Activated CD4-positive, alpha-beta memory T cell treated with anti-CD3 and anti-CD28 coated beads for 36 hours (primary cell): ENCODE measurements at regions of chrX and their contacts with region 1.

Region 1: DNA sequence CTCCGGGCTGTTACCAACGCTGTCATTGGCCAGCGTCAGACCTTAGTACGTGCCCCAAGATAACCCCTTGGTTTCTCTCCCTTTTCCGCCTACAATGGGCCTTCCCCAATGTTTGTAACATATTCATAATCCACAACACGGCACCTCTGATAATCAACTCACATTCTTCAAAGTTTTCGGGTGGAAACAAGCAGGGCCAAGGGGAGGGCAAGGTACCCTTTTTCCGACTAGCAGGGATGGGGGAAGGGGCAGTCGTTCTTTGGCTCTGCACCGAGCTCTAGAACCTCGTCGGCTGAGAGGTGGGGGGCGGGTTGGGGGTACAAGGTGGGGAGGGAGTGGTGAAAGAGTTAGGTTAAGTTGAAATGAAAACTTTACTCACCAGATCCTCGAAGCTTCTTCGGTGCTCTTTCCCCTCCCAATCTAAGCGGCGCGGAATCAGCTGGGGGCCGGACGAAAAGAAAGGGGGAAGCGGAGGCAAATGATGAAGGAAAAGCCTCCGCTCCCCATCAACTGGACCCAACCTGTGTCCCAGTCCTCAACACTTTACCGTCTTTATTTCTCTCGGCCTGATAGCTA is 1.4 kb downstream of the BRWD3 start:
- DNase-seq: peak; percentile 85
- H3K4me3 Mint-ChIP-seq: peak overlapping the region; percentile 86
- H3K27ac Mint-ChIP-seq: peak overlapping the region; percentile 97
- H3K4me1 Mint-ChIP-seq: peaks cover 17% of the 10 kb centered on the region
- H3K27me3 Mint-ChIP-seq: peaks cover 1% of the 10 kb centered on the region

Region 2: DNA sequence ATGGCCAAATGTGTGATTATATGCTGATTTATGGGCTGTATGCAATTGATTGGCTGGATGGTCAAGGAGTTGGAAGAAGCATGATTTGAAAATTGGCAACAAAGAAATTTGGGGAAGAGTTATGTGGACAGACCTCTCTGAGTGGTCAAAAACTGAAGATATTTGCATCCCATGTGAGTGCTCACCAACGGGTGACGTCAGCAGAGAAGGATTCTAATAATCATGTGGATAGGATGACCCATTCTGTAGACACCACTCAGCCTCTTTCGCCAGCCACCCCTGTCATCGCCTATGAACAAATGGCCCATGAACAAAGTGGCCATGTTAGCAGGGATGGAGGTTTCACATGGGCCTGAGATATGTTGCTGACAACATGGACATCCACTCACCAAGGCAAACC is 284.6 kb before region 1 on chrX:
- CTCF ChIA-PET with region 1: no interaction called
- POLR2A ChIA-PET with region 1: no interaction called
- intact Hi-C with region 1: no loop called
- DNase-seq: no peak
- H3K4me3 Mint-ChIP-seq: no peak overlapping the region
- H3K27ac Mint-ChIP-seq: no peak overlapping the region
- H3K4me1 Mint-ChIP-seq: no peaks in the 10 kb centered on the region
- H3K27me3 Mint-ChIP-seq: no peaks in the 10 kb centered on the region

Region 3: GRCh38 chrX:80667967-80668366 is 140.3 kb before region 1 on chrX:
- CTCF ChIA-PET with region 1: no interaction called
- POLR2A ChIA-PET with region 1: no interaction called
- intact Hi-C with region 1: loop called (anchors 1 kb)
- DNase-seq: peak; percentile 56
- H3K4me3 Mint-ChIP-seq: no peak overlapping the region
- H3K27ac Mint-ChIP-seq: no peak overlapping the region
- H3K4me1 Mint-ChIP-seq: peaks cover 5% of the 10 kb centered on the region
- H3K27me3 Mint-ChIP-seq: no peaks in the 10 kb centered on the region

Region 4: GRCh38 chrX:80747832-80748231 is 60.4 kb before region 1 on chrX:
- CTCF ChIA-PET with region 1: no interaction called
- POLR2A ChIA-PET with region 1: no interaction called
- intact Hi-C with region 1: loop called (anchors 5 kb)
- DNase-seq: peak; percentile 22
- H3K4me3 Mint-ChIP-seq: no peak overlapping the region
- H3K27ac Mint-ChIP-seq: no peak overlapping the region
- H3K4me1 Mint-ChIP-seq: peaks cover 14% of the 10 kb centered on the region
- H3K27me3 Mint-ChIP-seq: no peaks in the 10 kb centered on the region

Region 5: GRCh38 chrX:81201671-81202455 is 393.6 kb after region 1 on chrX and contains the starts of genes HMGN5 and SH3BGRL:
- CTCF ChIA-PET with region 1: no interaction called
- POLR2A ChIA-PET with region 1: no interaction called
- intact Hi-C with region 1: loop called (anchors 1 kb)
- DNase-seq: peak; percentile 78
- H3K4me3 Mint-ChIP-seq: peak within 1 kb of the TSS; percentile 95
- H3K27ac Mint-ChIP-seq: peak within 1 kb of the TSS; percentile 92
- H3K4me1 Mint-ChIP-seq: peaks cover 28% of the 10 kb centered on the region
- H3K27me3 Mint-ChIP-seq: no peaks in the 10 kb centered on the region
- total RNA-seq, gene HMGN5: 5.4 to 6.1 TPM
- total RNA-seq, gene SH3BGRL: 39.1 to 41.9 TPM